Sciatic nerve (tissue), 2 donors: ENCODE measurements at regions of chr7 and their contacts with region 1.

Region 1: GRCh38 chr7:101058355-101058754 is 26.9 kb upstream of the TRIM56 start:
- DNase-seq: peak; percentile 83
- ATAC-seq: peak; percentile 73

Region 2: DNA sequence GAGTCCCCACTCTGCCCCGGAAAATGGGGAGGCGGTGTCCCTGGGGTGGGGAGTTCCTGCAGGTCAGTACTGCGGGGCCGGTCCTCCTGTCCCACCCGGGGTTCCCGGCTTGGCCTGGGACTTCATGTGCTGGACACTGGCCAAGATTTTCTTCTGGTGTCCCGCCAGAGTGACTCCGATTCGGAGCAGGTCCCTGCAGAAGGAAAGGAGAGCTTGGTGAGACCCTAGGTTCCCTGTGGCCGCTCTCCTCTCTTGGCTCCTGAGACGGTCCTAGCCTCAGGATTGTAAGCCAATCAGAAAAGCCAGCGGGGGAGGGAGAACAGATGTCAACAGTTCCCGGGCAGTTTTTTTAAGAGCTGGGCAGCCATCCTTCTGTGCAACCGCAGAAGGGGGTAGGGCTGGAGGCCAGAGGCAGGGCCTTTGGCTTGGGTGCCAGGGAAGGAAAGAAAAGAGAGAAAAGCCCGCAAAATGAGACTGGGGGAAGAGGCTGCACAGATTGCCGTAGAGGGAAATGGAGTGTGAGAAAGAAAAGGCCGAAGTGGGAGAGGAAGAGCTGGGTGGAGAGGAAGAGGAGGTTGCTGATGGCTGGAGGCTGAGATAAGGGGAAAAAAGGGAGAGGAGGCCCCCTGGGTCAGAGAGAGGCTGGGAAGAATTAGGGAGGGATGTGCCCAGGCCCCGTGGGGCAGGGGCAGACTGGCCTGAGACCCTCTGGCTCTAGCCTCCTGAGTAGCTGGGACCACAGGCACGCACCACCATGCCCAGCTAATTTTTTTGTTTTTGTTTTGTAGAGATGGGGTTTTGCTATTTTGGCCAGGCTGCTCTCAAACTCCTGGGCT is 254.7 kb before region 1 on chr7:
- intact Hi-C with region 1: loop called (anchors 5 kb)
- DNase-seq: peak; percentile 84
- ATAC-seq: peak; percentile 96

Region 3: GRCh38 chr7:100894860-100895421 is 163.4 kb before region 1 on chr7:
- intact Hi-C with region 1: loop called (anchors 5 kb)
- DNase-seq: no peak
- ATAC-seq: no peak

Region 4: GRCh38 chr7:102169651-102170392 is 1111.5 kb after region 1 on chr7:
- intact Hi-C with region 1: no loop called
- DNase-seq: no peak
- ATAC-seq: peak; percentile 45